Activated B cell treated with CpG ODN at 0.5 μM for 24 hours (primary cell): ENCODE measurements at regions of chr1 and their contacts with region 1.

Region 1: GRCh38 chr1:230978491-230979388 is at the starts of genes ARV1 and TTC13:
- DNase-seq: peak; percentile 93
- ATAC-seq: peak; percentile 95
- H3K4me3 Mint-ChIP-seq: peak within 1 kb of the TSS; percentile 96
- H3K27ac Mint-ChIP-seq: peak within 1 kb of the TSS; percentile 99
- H3K4me1 Mint-ChIP-seq: peaks cover 29% of the 10 kb centered on the region
- H3K27me3 Mint-ChIP-seq: no peaks in the 10 kb centered on the region
- CTCF ChIP-seq: no peak
- total RNA-seq, gene ARV1: 13.1 and 13.7 TPM in 2 replicates
- total RNA-seq, gene TTC13: 30.9 and 35.4 TPM in 2 replicates

Region 2: DNA sequence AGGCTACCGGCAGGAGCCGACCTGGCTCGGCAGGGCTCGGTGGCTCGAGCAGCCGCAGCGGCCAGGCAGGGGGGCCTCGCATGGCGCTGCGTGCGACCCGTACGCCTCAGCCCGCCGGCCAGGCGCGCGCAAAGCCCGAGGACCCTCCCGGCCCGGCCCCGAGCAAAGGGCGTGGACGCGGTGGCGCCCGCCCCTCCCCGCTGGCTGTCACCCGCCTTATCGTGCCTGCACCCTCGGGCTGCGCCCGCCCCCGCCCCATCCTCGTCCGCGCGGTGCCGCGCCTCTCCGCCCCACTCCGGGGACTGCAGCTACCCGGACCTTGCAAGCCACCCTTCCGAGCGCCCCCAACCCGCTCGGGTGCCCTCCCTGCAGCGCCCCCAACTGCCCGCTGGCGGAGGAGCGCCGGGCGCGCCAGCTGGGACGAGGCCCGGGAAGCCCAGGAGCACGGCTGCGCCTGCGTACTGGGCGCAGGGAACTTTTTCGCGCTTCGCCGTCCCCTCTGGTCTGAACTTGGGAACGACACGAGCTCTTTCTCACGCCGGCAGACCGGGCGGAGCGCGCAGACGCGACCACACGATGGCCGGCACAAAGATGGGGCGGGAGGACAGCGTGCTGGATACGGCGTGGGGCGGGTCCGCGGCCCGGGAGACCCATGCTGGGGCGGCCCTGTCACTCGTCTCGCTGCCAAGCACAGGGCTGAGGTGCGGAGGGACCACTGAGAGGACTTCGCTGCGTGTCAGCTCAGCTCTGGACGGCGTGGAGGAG is 1420.0 kb before region 1 on chr1 and contains the start of gene ABCB10:
- CTCF ChIA-PET with region 1: no interaction called
- POLR2A ChIA-PET with region 1: no interaction called
- intact Hi-C with region 1: loop called (anchors 2 kb)
- DNase-seq: peak; percentile 91
- ATAC-seq: peak; percentile 80
- H3K4me3 Mint-ChIP-seq: peak within 1 kb of the TSS; percentile 95
- H3K27ac Mint-ChIP-seq: peak within 1 kb of the TSS; percentile 90
- H3K4me1 Mint-ChIP-seq: peaks cover 31% of the 10 kb centered on the region
- H3K27me3 Mint-ChIP-seq: no peaks in the 10 kb centered on the region
- CTCF ChIP-seq: no peak
- total RNA-seq, gene ABCB10: 11.7 and 14.5 TPM in 2 replicates

Region 3: DNA sequence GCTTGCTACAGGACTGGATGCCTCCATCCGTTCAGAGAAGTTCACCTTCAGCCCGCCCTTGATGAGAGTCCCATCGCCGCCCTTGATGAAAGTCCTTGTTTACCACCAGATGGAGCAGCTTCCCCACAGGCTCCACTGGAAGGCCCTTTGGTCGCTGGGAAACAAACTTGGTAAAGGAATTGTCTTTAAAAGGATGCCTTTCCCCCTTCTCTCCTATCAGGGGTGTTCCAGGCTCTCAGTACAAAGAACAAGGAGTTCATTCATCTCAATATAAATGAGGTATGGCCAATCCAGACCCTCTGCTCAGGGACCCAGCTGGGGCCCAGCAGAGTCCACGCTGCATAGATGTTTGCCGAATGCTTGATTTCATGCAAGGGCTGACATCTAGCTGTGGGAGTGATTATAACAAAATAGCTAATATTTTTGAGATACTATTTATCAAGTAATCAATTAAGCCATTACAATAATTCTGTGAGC is 180.8 kb before region 1 on chr1:
- CTCF ChIA-PET with region 1: no interaction called
- POLR2A ChIA-PET with region 1: no interaction called
- intact Hi-C with region 1: loop called (anchors 2 kb)
- DNase-seq: no peak
- ATAC-seq: no peak
- H3K4me3 Mint-ChIP-seq: no peak overlapping the region
- H3K27ac Mint-ChIP-seq: no peak overlapping the region
- H3K4me1 Mint-ChIP-seq: no peaks in the 10 kb centered on the region
- H3K27me3 Mint-ChIP-seq: peaks cover 21% of the 10 kb centered on the region
- CTCF ChIP-seq: no peak

Region 4: GRCh38 chr1:230948301-230948700 is 30.4 kb before region 1 on chr1:
- CTCF ChIA-PET with region 1: interaction called, 3 read pairs
- POLR2A ChIA-PET with region 1: interaction called, 21 read pairs
- intact Hi-C with region 1: loop called (anchors 1 kb)
- DNase-seq: no peak
- ATAC-seq: peak; percentile 91
- H3K4me3 Mint-ChIP-seq: peak overlapping the region; percentile 45
- H3K27ac Mint-ChIP-seq: peak overlapping the region; percentile 42
- H3K4me1 Mint-ChIP-seq: peaks cover 23% of the 10 kb centered on the region
- H3K27me3 Mint-ChIP-seq: no peaks in the 10 kb centered on the region
- CTCF ChIP-seq: no peak

Region 5: DNA sequence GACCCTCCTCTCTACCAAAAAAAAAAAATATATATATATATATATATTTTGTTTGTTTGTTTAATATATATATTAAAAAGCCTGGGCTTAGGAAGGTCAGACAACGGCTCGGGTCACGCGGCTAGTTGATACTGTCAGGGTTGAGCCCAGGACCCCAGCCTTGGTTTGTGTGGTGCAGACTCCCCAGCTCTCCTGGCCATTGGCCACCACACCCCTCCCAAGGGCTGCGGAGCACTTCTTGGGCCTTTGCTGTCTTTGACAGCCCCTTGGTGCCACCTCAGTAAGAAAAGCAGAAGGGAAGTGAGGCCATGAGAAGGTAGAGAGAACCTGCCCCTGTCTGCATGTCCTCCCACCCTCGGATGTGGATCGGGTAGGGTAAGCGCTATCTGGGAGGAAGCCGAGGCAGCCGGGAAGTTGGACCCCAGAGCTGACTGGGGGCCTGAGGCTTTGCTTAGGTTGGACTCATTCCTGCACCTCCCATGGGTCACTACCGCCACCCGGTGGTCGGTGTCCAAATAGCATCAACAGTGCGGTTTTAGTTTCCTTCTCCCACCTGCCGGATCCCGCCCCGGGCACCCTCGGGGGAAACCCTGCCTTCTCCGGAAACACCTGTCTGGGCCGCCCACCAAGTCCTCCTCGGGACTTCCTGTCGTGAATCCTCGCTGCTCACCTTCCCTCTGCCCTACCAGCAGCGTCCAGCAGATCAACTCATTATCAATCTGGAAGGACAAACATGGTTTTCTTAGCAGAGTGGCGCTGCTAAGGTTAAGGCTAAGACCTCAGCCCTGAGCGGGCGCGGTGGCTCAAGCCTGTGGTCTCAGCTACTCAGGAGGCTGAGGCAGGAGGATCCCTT is 232.5 kb after region 1 on chr1:
- CTCF ChIA-PET with region 1: interaction called, 4 read pairs
- POLR2A ChIA-PET with region 1: no interaction called
- intact Hi-C with region 1: loop called (anchors 1 kb)
- DNase-seq: peak; percentile 90
- ATAC-seq: peak; percentile 89
- H3K4me3 Mint-ChIP-seq: peak overlapping the region; percentile 93
- H3K27ac Mint-ChIP-seq: peak overlapping the region; percentile 85
- H3K4me1 Mint-ChIP-seq: peaks cover 37% of the 10 kb centered on the region
- H3K27me3 Mint-ChIP-seq: no peaks in the 10 kb centered on the region
- CTCF ChIP-seq: peak; percentile 46

Region 6: DNA sequence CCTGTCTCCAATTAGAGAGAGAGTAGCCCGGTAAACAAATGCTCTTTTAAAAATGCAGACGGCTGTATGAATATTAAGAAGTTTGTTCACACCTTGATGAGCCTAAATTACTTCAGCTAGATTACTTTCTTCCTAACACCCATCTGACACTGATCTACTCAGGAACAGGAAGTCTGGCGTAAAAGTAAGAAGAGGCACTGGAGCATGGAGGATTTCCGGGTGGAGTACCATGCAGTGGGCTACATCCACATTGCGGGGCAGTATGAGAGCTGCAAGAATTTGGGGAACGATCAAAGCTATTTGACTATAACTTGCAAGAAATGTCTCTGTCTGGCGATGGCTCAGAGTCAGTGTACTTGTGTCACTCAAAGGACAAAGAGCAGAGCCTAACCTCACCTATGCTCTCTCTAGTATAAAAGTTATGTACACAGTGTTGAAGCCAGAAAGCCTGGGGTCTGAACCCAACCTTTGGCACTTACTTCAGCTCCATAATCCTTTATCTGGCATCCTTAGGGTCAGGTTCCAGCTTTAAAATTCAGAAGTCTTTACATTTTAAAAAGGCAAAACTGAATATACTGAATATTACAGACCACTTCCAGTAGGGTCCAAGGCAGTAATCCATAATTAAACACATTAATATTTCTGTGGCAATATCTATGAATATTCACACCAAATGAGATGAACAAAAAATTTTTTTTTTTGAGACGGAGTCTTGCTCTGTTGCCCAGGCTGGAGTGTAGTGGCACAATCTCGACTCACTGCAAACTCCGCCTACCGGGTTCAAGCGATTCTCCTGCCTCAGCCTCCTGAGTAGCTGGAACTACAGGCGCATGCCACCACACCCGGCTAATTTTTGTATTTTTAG is 254.4 kb after region 1 on chr1:
- CTCF ChIA-PET with region 1: no interaction called
- POLR2A ChIA-PET with region 1: no interaction called
- intact Hi-C with region 1: no loop called
- DNase-seq: no peak
- ATAC-seq: peak; percentile 89
- H3K4me3 Mint-ChIP-seq: peak overlapping the region; percentile 63
- H3K27ac Mint-ChIP-seq: peak overlapping the region; percentile 26
- H3K4me1 Mint-ChIP-seq: peaks cover 35% of the 10 kb centered on the region
- H3K27me3 Mint-ChIP-seq: no peaks in the 10 kb centered on the region
- CTCF ChIP-seq: no peak

Region 7: GRCh38 chr1:231421993-231422764 is 443.4 kb after region 1 on chr1 and contains the start of gene EGLN1:
- CTCF ChIA-PET with region 1: no interaction called
- POLR2A ChIA-PET with region 1: no interaction called
- intact Hi-C with region 1: loop called (anchors 2 kb)
- DNase-seq: peak; percentile 82
- ATAC-seq: peak; percentile 84
- H3K4me3 Mint-ChIP-seq: peak within 1 kb of the TSS; percentile 97
- H3K27ac Mint-ChIP-seq: peak within 1 kb of the TSS; percentile 91
- H3K4me1 Mint-ChIP-seq: peaks cover 43% of the 10 kb centered on the region
- H3K27me3 Mint-ChIP-seq: no peaks in the 10 kb centered on the region
- CTCF ChIP-seq: no peak
- total RNA-seq, gene EGLN1: 10.7 and 15.6 TPM in 2 replicates